ENCODE measurements at regions of chr3 and their contacts with region 1.

Region 1: GRCh38 chr3:46695177-46695961 is 1.9 kb upstream of the ALS2CL start:
- DNase-seq: peak; percentile 49
- ATAC-seq: no peak
- H3K4me3 ChIP-seq: no peak overlapping the region
- H3K4me3 Mint-ChIP-seq: peak overlapping the region; percentile 56
- H3K27ac ChIP-seq: no peak overlapping the region
- H3K27ac Mint-ChIP-seq: peak overlapping the region; percentile 7
- H3K4me1 ChIP-seq: peaks cover 33 to 38% of the 10 kb centered on the region in 2 donors
- H3K4me1 Mint-ChIP-seq: peaks cover 28% of the 10 kb centered on the region
- H3K27me3 ChIP-seq: peaks cover 0 to 35% (median 8%) of the 10 kb centered on the region in 4 experiments
- H3K27me3 Mint-ChIP-seq: peaks cover 9% of the 10 kb centered on the region
- CTCF ChIP-seq: peak; percentile 43

Region 2: GRCh38 chr3:47009225-47010110 is 314.1 kb after region 1 on chr3:
- CTCF ChIA-PET with region 1: no interaction called
- POLR2A ChIA-PET with region 1: no interaction called
- intact Hi-C with region 1: loop called (anchors 5 kb)
- DNase-seq: peak; percentile 88
- ATAC-seq: peak; percentile 97
- H3K4me3 ChIP-seq: peak overlapping the region in 4 of 5 experiments; percentile 50 to 68 (median 64)
- H3K4me3 Mint-ChIP-seq: peak overlapping the region; percentile 86
- H3K27ac ChIP-seq: peak overlapping the region; percentile 24 to 90
- H3K27ac Mint-ChIP-seq: peak overlapping the region; percentile 86
- H3K4me1 ChIP-seq: peaks cover 6 to 17% of the 10 kb centered on the region in 2 donors
- H3K4me1 Mint-ChIP-seq: peaks cover 10% of the 10 kb centered on the region
- H3K27me3 ChIP-seq: no peaks in the 10 kb centered on the region
- H3K27me3 Mint-ChIP-seq: no peaks in the 10 kb centered on the region
- CTCF ChIP-seq: no peak